KBM-7 (cell line): ENCODE measurements at regions of chr7 and their contacts with region 1.

Region 1: DNA sequence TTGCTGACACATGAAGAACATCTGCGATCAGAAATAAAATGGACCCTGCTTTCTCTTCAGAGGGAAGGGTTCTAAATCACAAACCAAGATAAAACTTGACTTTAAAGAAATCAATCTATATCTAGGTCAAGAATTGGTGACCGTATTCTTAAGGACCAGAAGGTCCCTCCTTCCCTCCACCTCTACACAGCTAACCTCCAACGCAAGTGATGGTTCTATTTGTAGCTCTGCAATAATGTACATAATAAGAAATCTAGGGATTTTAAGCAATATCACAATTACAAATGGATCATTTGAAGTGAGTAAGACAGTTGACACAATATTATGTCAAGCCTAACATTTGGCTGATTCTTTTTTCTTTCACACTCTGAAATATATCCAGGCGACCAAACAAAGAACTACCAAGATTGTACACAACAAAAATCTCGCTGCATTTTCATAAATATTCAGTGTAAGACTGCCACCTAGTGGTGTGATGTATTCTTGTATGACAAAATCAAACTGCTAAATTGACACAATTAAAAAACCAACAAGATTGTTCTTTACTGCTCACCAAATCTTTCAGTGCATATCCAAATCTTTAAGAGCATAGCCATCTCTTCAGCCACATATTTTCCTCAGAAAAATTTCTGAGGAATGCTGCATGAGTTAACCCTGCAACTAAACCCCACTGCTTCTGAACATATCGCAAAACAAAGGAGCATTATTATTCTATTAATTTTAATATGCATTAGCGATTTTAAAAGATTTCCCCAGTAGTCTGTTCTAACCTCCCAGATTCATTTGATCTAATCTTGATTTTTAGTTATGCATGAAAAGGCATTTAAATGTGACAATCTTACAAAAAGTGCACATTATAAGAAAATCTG is 44.5 kb downstream of the ICA1 start:
- DNase-seq: peak; percentile 72

Region 2: DNA sequence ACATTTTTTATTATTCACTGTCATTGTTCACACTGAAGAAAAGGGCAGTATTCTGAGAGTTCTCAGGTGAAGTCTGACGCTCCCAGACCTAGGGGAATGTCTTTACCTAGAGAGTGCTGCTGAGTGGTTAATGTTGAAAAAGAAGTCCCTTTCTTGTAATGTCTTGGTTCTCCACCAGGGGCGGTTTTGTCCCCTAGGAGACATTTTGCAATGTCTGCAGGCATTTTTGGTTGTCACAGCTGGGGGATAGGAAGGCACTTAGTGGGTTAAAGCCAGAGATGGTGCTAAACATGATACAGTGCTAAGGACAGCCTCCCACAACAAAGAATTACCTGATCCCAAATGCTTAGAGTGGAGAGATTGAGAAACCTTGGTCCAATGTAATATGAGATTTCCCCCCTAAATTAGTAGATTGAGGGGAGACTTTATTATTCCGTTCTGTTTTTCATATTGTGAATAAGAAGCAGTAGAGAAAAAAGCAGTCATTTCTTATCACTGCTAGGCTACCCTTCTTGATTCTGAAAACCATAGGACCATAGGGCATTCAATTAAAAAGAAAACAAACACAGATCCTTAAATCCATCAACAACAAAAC is 563.7 kb before region 1 on chr7:
- in situ Hi-C with region 1: loop called (anchors 25 kb)
- DNase-seq: peak; percentile 60

Region 3: GRCh38 chr7:8277394-8277982 is 60.1 kb after region 1 on chr7:
- in situ Hi-C with region 1: no loop called
- DNase-seq: peak; percentile 50